Activated T-helper 1 cell treated with anti-CD3 and anti-CD28 coated beads, Interleukin-12 subunit alpha, Interleukin-12 subunit beta, Interleukin-2, Interleukin-4 antibody, amounts not matched to agents 30 ng/mL and 10 ng/mL and 1 ng/mL, durations not matched to agents 14 hours and 24 hours and 36 hours (primary cell): ENCODE measurements at regions of chr6 and their contacts with region 1.

Region 1: DNA sequence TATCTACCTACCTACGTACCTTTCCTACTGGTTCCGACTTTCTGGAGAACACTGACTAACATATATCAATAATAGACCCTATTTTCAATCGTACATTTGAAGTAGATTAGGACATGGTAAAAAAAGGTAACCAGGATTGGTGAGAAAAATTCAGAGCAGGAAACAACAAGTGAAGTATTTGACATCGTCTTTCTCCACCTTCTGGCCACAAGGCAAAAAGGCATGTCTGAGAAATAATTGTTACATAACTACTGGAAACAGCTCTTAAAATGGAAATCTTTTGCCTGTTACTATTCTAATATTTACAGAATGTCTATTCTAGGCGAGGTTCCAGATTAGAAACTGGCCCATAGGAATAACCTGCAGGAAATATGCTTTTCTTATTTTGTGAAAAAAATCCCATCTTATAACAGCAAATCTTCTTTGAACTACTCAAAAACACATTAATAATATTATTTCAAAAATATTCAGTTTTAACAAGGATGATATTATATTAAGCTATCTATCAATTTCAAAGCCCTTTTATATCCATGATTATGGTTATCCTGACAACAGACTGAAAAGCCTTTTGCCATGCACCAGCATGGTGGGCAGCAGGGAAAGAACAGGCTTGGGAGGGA is 80.8 kb downstream of the RCAN2 start:
- DNase-seq: no peak
- H3K4me3 Mint-ChIP-seq: no peak overlapping the region
- H3K27ac Mint-ChIP-seq: no peak overlapping the region
- H3K4me1 Mint-ChIP-seq: no peaks in the 10 kb centered on the region
- H3K27me3 Mint-ChIP-seq: peaks cover 6% of the 10 kb centered on the region

Region 2: DNA sequence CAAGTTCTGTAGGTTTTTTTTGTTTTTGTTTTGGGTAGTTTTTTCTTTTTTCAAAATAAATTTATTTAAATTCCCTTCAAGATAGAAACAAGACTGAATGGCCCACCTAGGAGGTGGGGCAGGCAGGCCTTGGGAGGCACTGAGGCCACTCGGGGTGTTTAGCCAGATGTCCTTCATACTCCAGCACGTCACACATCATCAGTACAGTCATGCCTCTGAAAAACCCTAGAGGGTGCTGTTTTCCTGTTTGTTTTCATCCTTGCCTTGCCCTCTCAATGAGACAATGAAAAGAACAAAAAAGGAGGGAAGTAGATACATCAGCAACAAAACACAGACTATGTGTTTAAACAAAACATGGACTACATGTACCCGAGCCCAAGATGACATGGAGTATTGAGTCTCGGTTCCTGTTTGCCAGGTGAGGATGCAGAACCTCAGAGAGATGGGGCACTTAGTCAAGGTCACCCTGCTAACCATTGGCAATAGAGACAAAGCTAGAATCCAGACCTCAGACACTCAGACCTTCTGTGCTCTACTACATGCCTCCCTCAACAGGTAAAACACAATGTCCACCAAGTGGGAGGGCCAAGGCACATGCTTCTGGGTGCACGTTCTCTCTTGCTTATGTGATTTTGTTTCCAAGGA is 368.0 kb before region 1 on chr6:
- intact Hi-C with region 1: loop called (anchors 2 kb)
- DNase-seq: no peak
- H3K4me3 Mint-ChIP-seq: no peak overlapping the region
- H3K27ac Mint-ChIP-seq: no peak overlapping the region
- H3K4me1 Mint-ChIP-seq: peaks cover 5% of the 10 kb centered on the region
- H3K27me3 Mint-ChIP-seq: no peaks in the 10 kb centered on the region

Region 3: GRCh38 chr6:46062306-46062706 is 348.1 kb before region 1 on chr6:
- intact Hi-C with region 1: no loop called
- DNase-seq: no peak
- H3K4me3 Mint-ChIP-seq: no peak overlapping the region
- H3K27ac Mint-ChIP-seq: no peak overlapping the region
- H3K4me1 Mint-ChIP-seq: no peaks in the 10 kb centered on the region
- H3K27me3 Mint-ChIP-seq: peaks cover 5% of the 10 kb centered on the region